Activated CD8-positive, alpha-beta T cell treated with anti-CD3 and anti-CD28 coated beads, Interleukin-2, amount 10 ng/mL, durations not matched to agents 7 days and 5 days (primary cell): ENCODE measurements at regions of chr4 and their contacts with region 1.

Region 1: GRCh38 chr4:40199999-40200874 is 3.4 kb downstream of the RHOH start:
- DNase-seq: peak; percentile 90
- ATAC-seq: peak; percentile 45
- H3K4me3 Mint-ChIP-seq: peak overlapping the region; percentile 93
- H3K27ac Mint-ChIP-seq: peak overlapping the region; percentile 96
- H3K4me1 Mint-ChIP-seq: peaks cover 37% of the 10 kb centered on the region
- H3K27me3 Mint-ChIP-seq: no peaks in the 10 kb centered on the region

Region 2: GRCh38 chr4:40056716-40057585 is 143.3 kb before region 1 on chr4 and contains the start of gene N4BP2:
- CTCF ChIA-PET with region 1: interaction called, 5 read pairs
- POLR2A ChIA-PET with region 1: interaction called, 52 read pairs
- DNase-seq: peak; percentile 80
- ATAC-seq: peak; percentile 49
- H3K4me3 Mint-ChIP-seq: peak within 1 kb of the TSS; percentile 93
- H3K27ac Mint-ChIP-seq: peak within 1 kb of the TSS; percentile 96
- H3K4me1 Mint-ChIP-seq: peaks cover 37% of the 10 kb centered on the region
- H3K27me3 Mint-ChIP-seq: peaks cover 8% of the 10 kb centered on the region
- total RNA-seq, gene N4BP2: 25.1 to 29.0 TPM

Region 3: GRCh38 chr4:40185830-40186664 is 14.2 kb before region 1 on chr4:
- CTCF ChIA-PET with region 1: interaction called, 11 read pairs
- POLR2A ChIA-PET with region 1: interaction called, 517 read pairs
- DNase-seq: no peak
- ATAC-seq: no peak
- H3K4me3 Mint-ChIP-seq: no peak overlapping the region
- H3K27ac Mint-ChIP-seq: no peak overlapping the region
- H3K4me1 Mint-ChIP-seq: peaks cover 63% of the 10 kb centered on the region
- H3K27me3 Mint-ChIP-seq: no peaks in the 10 kb centered on the region

Region 4: GRCh38 chr4:40228497-40229365 is 28.5 kb after region 1 on chr4:
- CTCF ChIA-PET with region 1: interaction called, 36 read pairs
- POLR2A ChIA-PET with region 1: interaction called, 280 read pairs
- DNase-seq: peak; percentile 56
- ATAC-seq: no peak
- H3K4me3 Mint-ChIP-seq: peak overlapping the region; percentile 64
- H3K27ac Mint-ChIP-seq: peak overlapping the region; percentile 84
- H3K4me1 Mint-ChIP-seq: peaks cover 95% of the 10 kb centered on the region
- H3K27me3 Mint-ChIP-seq: no peaks in the 10 kb centered on the region

Region 5: DNA sequence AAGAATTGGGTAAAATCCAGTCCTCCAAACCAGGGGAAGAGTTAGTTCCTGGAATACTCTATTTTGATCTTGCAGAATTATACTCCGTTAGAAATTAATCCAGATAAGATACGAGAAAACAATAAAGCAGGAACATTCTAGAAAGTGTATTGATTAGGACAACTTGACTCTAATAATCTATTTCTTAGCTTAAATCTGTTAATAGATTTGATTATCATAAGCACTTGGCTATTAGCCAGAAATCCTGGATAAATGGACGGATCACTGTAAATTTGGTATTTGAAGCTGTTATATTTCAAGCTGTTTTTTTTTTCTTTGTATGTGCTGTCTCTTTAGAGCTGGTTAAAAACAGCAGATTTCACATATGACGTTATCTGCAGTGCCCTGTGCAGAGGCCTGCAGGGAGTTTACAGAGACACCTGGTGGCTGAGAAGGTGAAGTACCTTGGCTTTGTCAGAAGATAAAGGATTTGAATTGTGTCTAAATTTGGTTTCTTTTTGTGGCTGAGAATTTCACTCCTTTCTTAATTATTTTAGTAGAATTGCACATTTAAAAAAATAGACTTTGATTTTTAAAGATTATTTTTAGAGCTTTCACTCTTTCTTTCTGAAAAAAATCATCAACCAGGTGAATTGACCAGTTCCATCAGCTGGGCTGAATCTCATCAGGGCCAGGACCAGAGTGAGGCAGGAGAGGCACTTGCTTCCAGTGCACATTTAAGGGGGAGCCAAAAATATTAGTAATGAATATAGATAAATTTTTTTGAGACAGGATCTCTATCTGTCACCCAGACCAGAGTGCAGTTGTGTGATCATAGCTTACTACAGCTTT is 125.2 kb after region 1 on chr4:
- CTCF ChIA-PET with region 1: interaction called, 13 read pairs
- POLR2A ChIA-PET with region 1: interaction called, 8 read pairs
- DNase-seq: peak; percentile 80
- ATAC-seq: peak; percentile 98
- H3K4me3 Mint-ChIP-seq: no peak overlapping the region
- H3K27ac Mint-ChIP-seq: peak overlapping the region; percentile 50
- H3K4me1 Mint-ChIP-seq: peaks cover 37% of the 10 kb centered on the region
- H3K27me3 Mint-ChIP-seq: no peaks in the 10 kb centered on the region